Activated CD4-positive, alpha-beta T cell treated with anti-CD3 and anti-CD28 coated beads for 36 hours (primary cell): ENCODE measurements at regions of chr7 and their contacts with region 1.

Region 1: GRCh38 chr7:30800785-30801252 is 29.6 kb downstream of the MINDY4 start:
- DNase-seq: peak; percentile 49
- ATAC-seq: peak; percentile 55
- H3K4me3 Mint-ChIP-seq: no peak overlapping the region
- H3K27ac Mint-ChIP-seq: no peak overlapping the region
- H3K4me1 Mint-ChIP-seq: peaks cover 13% of the 10 kb centered on the region
- H3K27me3 Mint-ChIP-seq: no peaks in the 10 kb centered on the region

Region 2: DNA sequence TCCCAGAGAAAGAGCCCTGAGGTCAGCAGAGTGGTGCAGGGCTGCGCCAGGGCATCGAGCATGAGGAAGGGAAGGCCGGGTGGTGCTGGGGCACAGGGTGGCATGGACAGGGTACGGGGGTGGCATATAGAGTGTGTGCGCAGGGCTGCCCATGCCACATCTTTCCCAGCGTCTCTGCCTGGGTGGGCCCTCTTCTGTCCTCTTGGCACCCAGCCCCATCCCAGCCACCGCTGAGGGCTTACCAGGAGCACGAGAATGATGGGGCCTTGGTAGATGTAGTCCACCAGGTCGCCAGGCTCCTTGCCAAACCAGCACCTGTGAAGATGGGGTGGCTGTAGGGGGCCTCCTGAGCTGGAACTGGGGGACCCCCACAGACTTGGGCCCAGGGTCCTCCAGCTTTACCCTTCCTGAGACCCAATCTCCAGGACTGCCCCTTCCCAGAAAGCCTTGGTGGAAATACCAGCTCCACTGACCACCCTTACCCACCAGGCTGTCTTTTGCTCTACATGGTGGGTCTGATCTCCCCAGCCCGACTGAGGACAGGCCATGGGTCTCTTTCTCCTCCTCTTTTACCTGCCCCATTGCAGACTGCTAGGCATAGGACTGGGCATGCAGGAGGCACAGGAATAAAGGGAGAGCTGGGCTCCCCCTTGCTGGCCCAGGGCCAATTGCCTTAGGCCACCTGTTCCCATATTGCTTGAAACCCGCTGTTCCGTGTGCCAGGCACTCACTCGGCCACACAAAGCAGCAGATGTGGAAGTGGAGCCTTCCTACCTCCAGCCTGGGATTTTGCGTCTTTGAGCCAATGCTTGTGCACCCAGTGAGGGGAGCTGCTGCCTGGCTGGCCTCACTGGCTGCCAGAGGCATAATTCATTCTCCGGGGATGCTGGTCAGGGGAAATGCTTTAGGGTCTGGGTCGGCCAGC is 140.2 kb before region 1 on chr7:
- CTCF ChIA-PET with region 1: no interaction called
- POLR2A ChIA-PET with region 1: no interaction called
- intact Hi-C with region 1: no loop called
- DNase-seq: no peak
- ATAC-seq: no peak
- H3K4me3 Mint-ChIP-seq: no peak overlapping the region
- H3K27ac Mint-ChIP-seq: no peak overlapping the region
- H3K4me1 Mint-ChIP-seq: no peaks in the 10 kb centered on the region
- H3K27me3 Mint-ChIP-seq: no peaks in the 10 kb centered on the region

Region 3: DNA sequence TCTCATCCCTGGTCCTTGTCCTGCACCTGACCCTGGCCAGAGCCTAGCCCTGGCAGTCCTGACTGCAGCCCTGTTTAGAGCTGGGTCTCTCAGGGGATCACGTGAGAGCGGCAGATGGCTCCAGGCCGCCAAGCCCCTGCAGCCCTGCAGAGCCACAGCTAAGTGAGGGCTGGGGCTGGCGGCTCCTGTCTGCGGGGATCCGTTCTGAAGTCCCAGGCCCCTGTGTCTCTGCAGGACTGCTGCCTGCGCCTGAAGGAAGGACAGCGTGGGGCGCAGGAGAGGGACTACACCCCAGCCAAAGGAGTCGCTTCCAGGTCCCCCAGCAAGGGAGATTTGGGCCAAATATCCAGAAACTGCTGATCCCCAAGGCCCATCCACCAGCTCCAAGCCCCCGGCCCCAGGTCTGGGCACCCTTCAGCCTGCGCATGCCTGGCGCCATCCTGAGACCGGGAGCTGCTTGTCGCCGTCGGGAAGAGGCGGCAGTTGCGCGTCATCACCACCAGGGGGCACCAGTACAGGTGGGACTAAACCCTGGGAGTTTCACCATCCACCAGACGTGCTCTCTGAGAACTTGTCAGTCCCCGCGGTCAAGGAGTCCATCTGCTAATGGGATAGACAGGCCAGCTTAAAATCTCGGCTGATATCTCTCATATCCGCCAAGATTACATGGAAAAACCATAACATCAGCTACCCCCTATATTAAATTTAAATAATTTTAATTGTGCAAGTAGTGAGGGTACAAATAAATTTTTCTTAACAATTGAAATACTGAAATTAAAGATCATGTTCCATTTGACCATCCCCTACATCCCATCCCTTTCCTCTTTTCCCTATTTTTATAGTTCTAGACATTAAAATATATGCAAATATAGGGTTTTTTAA is 137.9 kb after region 1 on chr7:
- CTCF ChIA-PET with region 1: no interaction called
- POLR2A ChIA-PET with region 1: no interaction called
- intact Hi-C with region 1: loop called in 1 of 2 experiments (anchors 1 kb)
- DNase-seq: peak; percentile 83
- ATAC-seq: peak; percentile 84
- H3K4me3 Mint-ChIP-seq: no peak overlapping the region
- H3K27ac Mint-ChIP-seq: no peak overlapping the region
- H3K4me1 Mint-ChIP-seq: no peaks in the 10 kb centered on the region
- H3K27me3 Mint-ChIP-seq: peaks cover 17% of the 10 kb centered on the region

Region 4: DNA sequence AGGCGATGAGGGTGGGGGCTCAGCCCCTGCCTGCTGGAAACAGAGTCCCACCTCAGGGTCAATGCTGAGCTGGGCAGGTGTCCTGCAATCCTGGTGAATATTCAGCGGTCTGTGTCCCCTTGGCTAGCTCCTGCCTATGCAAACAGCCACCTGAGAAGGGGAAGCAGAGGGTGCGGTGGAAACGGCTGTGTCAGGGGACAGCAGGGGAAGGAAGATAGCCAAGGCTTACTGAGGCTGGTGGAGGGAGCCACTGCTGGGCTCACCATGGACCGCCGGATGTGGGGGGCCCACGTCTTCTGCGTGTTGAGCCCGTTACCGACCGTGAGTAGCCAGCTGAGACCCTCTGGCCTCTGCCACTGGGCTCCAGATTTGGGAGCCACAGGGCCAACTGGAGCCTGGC is 163.0 kb after region 1 on chr7 and contains the start of gene GHRHR:
- CTCF ChIA-PET with region 1: no interaction called
- POLR2A ChIA-PET with region 1: no interaction called
- intact Hi-C with region 1: no loop called
- DNase-seq: no peak
- ATAC-seq: no peak
- H3K4me3 Mint-ChIP-seq: no peak within 1 kb of the TSS
- H3K27ac Mint-ChIP-seq: no peak within 1 kb of the TSS
- H3K4me1 Mint-ChIP-seq: no peaks in the 10 kb centered on the region
- H3K27me3 Mint-ChIP-seq: peaks cover 10% of the 10 kb centered on the region
- total RNA-seq, gene GHRHR: not detected

Region 5: DNA sequence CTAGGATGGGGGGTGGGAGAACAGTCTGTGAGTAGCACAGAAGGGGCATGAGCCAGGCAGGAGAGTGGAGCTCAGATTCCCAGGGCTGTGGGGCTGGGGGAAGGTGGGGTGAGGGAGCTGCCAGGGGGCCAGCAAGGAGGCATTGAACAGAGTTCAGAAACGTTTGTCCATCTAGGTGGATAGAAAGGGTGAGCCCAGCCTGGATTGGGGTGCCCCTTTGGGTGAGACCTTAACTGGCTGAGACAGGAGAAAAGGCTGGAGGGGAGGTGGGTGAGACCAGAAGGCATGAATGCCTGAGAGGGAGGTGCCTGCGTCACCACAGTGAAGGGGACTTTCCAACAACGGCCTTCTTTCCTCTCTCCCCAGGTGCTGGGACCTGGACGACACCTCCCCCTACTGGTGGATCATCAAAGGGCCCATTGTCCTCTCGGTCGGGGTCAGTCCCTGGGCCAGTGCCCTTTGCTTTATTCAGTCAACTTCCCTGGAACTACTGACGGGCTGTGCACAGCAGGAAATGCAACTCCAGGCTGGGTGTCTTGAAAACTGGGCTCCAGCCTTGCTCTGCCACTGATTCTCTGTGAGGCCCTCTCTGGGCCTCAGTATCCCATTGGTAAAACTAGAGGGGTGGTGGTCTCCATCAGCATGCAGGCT is 173.9 kb after region 1 on chr7:
- CTCF ChIA-PET with region 1: interaction called, 3 read pairs
- POLR2A ChIA-PET with region 1: no interaction called
- intact Hi-C with region 1: loop called (anchors 1 kb)
- DNase-seq: peak; percentile 81
- ATAC-seq: peak; percentile 95
- H3K4me3 Mint-ChIP-seq: no peak overlapping the region
- H3K27ac Mint-ChIP-seq: no peak overlapping the region
- H3K4me1 Mint-ChIP-seq: peaks cover 2% of the 10 kb centered on the region
- H3K27me3 Mint-ChIP-seq: peaks cover 26% of the 10 kb centered on the region

Region 6: GRCh38 chr7:31122649-31123058 is 321.8 kb after region 1 on chr7:
- CTCF ChIA-PET with region 1: interaction called, 5 read pairs
- POLR2A ChIA-PET with region 1: no interaction called
- intact Hi-C with region 1: loop called (anchors 1 to 10 kb)
- DNase-seq: peak; percentile 67
- ATAC-seq: peak; percentile 61
- H3K4me3 Mint-ChIP-seq: no peak overlapping the region
- H3K27ac Mint-ChIP-seq: no peak overlapping the region
- H3K4me1 Mint-ChIP-seq: no peaks in the 10 kb centered on the region
- H3K27me3 Mint-ChIP-seq: peaks cover 4% of the 10 kb centered on the region